ENCODE measurements at regions of chr18 and their contacts with region 1.

Region 1: GRCh38 chr18:29712785-29713184 is 1329.8 kb downstream of the DSC3 start:
- H3K4me3 Mint-ChIP-seq: no peak overlapping the region
- H3K27ac Mint-ChIP-seq: no peak overlapping the region
- H3K4me1 Mint-ChIP-seq: no peaks in the 10 kb centered on the region
- H3K27me3 Mint-ChIP-seq: no peaks in the 10 kb centered on the region

Region 2: DNA sequence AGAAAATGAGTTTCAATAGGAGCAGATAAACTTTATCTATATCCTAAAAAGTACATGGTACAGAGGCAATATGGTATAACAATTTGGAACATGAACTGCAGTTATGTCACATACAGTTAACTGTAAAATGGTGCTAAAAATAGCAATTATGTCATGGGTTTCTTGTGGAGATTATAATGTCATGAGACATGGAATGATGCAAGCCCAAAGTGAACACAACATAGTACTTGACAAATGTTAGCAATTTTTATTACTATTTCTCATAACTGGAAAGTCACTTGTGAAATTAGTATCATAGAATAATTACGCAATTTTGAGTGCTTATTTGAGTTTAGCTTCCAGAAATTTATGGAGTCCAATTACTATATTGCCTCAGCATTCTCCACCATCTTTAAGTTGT is 66.3 kb after region 1 on chr18:
- intact Hi-C with region 1: loop called (anchors 10 kb)
- H3K4me3 Mint-ChIP-seq: no peak overlapping the region
- H3K27ac Mint-ChIP-seq: no peak overlapping the region
- H3K4me1 Mint-ChIP-seq: no peaks in the 10 kb centered on the region
- H3K27me3 Mint-ChIP-seq: no peaks in the 10 kb centered on the region

Measured in dendritic cell treated with granulocyte-macrophage colony-stimulating factor and Interleukin-4, amounts not matched to agents 40 ng/mL and 50 ng/mL, for 4 days (primary cell).